WTC11 (cell line): ENCODE measurements at regions of chr12 and their contacts with region 1.

Region 1: DNA sequence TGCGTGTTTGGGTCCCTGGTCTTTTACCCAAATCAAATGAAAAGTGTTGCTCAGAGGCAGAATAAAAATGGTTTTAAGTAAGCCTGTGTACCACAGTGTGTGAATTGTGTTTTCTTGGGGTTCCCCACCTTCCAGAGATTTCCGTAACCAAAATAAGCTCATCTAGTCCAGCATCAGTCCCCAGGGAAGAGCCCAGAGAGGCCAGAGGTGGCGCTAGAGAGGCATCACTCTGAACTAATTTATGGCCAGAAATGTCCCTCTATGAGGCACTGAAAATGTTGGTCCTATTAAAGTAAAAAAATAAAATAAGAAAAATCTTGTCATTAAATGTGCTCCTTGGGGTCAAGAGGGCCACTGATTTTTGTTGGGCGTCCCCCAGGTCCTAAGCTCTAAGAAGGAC is 24.9 kb upstream of the PRKAB1 start:
- DNase-seq: peak; percentile 60
- ATAC-seq: peak; percentile 74
- H3K4me3 Mint-ChIP-seq: no peak overlapping the region
- H3K27ac Mint-ChIP-seq: no peak overlapping the region
- H3K4me1 Mint-ChIP-seq: no peaks in the 10 kb centered on the region
- H3K27me3 Mint-ChIP-seq: peaks cover 7% of the 10 kb centered on the region; the same call in 1 of the 2 replicates
- CTCF ChIP-seq: peak; percentile 74

Region 2: DNA sequence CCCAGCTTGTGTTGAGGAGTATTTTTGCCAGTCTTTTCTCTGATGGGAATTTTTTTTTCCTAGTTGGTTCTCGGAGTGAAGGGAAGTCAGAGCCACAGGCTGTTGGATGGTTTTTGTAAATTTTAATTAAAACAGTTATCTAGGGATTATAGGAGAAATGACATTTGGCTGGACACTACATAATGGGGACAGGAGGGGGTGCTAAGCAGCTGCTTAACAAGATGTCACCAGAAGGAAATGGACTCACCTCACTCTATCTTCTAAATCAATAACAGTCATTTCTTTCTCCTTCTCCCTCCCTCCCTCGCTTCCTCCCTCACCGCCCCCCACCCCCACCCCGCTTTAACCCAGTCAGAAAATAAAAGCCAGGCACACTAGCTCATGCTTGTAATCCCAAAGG is 142.8 kb before region 1 on chr12:
- CTCF ChIA-PET with region 1: interaction called, 13 read pairs
- POLR2A ChIA-PET with region 1: no interaction called
- DNase-seq: no peak
- ATAC-seq: no peak
- H3K4me3 Mint-ChIP-seq: no peak overlapping the region
- H3K27ac Mint-ChIP-seq: no peak overlapping the region
- H3K4me1 Mint-ChIP-seq: peaks cover 40% of the 10 kb centered on the region
- H3K27me3 Mint-ChIP-seq: no peaks in the 10 kb centered on the region; the same call in 1 of the 2 replicates
- CTCF ChIP-seq: no peak

Region 3: DNA sequence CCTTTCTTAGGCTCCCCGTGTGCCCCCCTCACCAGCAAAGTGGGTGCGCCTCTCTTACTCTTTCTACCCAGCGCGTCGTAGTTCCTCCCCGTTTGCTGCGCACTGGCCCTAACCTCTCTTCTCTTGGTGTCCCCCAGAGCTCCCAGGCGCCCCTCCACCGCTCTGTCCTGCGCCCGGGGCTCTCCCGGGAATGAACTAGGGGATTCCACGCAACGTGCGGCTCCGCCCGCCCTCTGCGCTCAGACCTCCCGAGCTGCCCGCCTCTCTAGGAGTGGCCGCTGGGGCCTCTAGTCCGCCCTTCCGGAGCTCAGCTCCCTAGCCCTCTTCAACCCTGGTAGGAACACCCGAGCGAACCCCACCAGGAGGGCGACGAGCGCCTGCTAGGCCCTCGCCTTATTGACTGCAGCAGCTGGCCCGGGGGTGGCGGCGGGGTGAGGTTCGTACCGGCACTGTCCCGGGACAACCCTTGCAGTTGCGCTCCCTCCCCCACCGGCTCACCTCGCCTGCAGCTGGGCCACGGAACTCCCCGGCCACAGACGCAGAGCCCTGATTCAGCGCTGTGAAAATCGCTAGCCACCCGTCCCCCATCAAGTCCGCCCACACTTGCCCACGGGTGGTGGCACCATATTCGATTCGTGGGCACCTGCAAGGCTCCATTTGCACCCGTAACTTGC is 48.1 kb before region 1 on chr12:
- CTCF ChIA-PET with region 1: interaction called, 20 read pairs
- POLR2A ChIA-PET with region 1: no interaction called
- DNase-seq: peak; percentile 37
- ATAC-seq: peak; percentile 52
- H3K4me3 Mint-ChIP-seq: peak overlapping the region; percentile 84
- H3K27ac Mint-ChIP-seq: no peak overlapping the region
- H3K4me1 Mint-ChIP-seq: peaks cover 27% of the 10 kb centered on the region
- H3K27me3 Mint-ChIP-seq: peaks cover 98% of the 10 kb centered on the region
- CTCF ChIP-seq: no peak

Region 4: GRCh38 chr12:119659289-119659897 is 16.4 kb after region 1 on chr12:
- CTCF ChIA-PET with region 1: interaction called, 17 read pairs
- POLR2A ChIA-PET with region 1: no interaction called
- DNase-seq: peak; percentile 38
- ATAC-seq: no peak
- H3K4me3 Mint-ChIP-seq: no peak overlapping the region
- H3K27ac Mint-ChIP-seq: no peak overlapping the region
- H3K4me1 Mint-ChIP-seq: no peaks in the 10 kb centered on the region
- H3K27me3 Mint-ChIP-seq: peaks cover 14% of the 10 kb centered on the region
- CTCF ChIP-seq: peak; percentile 63

Region 5: DNA sequence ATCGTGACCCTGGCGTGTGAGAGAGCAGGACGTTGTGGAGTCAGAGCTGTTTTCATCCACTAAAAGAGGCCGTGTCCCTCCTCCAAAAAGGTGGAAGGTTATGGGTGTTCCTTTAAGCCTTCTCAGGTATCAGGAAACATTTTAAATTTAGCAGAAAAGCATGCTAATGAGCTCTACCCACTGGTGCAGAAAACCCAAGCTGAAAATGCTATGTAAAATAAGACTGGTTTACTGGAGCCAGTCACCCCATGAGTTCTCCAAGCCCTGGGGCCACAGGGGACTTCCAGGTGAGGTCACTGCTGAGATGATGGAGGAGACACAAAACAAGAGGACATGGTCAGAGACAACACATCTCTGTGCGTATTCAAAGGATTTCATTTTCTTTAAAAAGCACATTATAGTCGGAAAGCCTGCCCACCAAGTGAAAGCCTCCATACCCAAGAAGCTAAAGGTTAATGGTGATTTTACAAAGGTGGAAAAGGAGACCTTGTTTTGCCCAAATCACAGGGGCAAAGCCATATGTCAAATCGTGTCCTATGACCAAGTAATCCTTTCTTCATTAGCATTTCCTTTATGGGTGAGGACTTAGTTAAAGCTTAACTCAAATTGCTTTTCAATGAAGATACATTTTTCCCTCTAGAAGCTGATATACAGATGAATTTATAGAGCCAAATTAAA is 39.1 kb after region 1 on chr12:
- CTCF ChIA-PET with region 1: interaction called, 12 read pairs
- POLR2A ChIA-PET with region 1: no interaction called
- DNase-seq: no peak
- ATAC-seq: peak; percentile 12; the same call in 1 of the 2 replicates
- H3K4me3 Mint-ChIP-seq: no peak overlapping the region
- H3K27ac Mint-ChIP-seq: peak overlapping the region; percentile 93
- H3K4me1 Mint-ChIP-seq: peaks cover 18% of the 10 kb centered on the region
- H3K27me3 Mint-ChIP-seq: no peaks in the 10 kb centered on the region
- CTCF ChIP-seq: no peak

Region 6: GRCh38 chr12:119835068-119835467 is 192.1 kb after region 1 on chr12:
- CTCF ChIA-PET with region 1: no interaction called
- POLR2A ChIA-PET with region 1: no interaction called
- DNase-seq: peak; percentile 16
- ATAC-seq: peak; percentile 76
- H3K4me3 Mint-ChIP-seq: no peak overlapping the region
- H3K27ac Mint-ChIP-seq: no peak overlapping the region; the same call in 1 of the 2 replicates
- H3K4me1 Mint-ChIP-seq: no peaks in the 10 kb centered on the region
- H3K27me3 Mint-ChIP-seq: no peaks in the 10 kb centered on the region
- CTCF ChIP-seq: no peak